CD4-positive, alpha-beta memory T cell (primary cell): ENCODE measurements at regions of chr14 and their contacts with region 1.

Region 1: DNA sequence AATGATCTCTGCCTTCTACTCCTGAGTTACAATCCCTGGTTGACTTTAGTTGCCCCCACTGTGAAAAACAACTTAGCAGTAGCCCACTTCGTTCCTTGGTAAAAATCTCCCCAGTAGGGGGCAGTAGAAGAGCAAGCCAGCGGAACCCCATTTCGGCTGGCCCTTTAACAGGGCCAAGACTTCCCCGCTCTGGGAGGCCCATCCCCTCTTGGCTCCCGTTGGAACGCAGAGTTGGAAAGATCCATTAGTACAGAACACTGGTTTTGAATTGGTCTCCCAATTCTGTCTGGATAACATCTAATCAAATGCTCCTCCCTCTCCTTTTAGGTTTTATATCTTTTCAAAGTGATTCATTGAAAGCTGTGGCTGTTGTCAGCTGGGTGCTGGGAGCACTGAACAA is 1133.3 kb downstream of the BCL11B start:
- DNase-seq: peak; percentile 69 to 81 (median 76)
- H3K4me3 ChIP-seq: peak overlapping the region in 1 of 2 donors; percentile 1
- H3K4me3 Mint-ChIP-seq: peak overlapping the region; percentile 52 to 88 (median 74)
- H3K27ac ChIP-seq: peak overlapping the region; percentile 59
- H3K27ac Mint-ChIP-seq: peak overlapping the region; percentile 84 to 96 (median 92)
- H3K4me1 ChIP-seq: peaks cover 88% of the 10 kb centered on the region
- H3K4me1 Mint-ChIP-seq: peaks cover 59 to 90% (median 77%) of the 10 kb centered on the region in 4 donors
- H3K27me3 ChIP-seq: no peaks in the 10 kb centered on the region
- H3K27me3 Mint-ChIP-seq: no peaks in the 10 kb centered on the region

Region 2: DNA sequence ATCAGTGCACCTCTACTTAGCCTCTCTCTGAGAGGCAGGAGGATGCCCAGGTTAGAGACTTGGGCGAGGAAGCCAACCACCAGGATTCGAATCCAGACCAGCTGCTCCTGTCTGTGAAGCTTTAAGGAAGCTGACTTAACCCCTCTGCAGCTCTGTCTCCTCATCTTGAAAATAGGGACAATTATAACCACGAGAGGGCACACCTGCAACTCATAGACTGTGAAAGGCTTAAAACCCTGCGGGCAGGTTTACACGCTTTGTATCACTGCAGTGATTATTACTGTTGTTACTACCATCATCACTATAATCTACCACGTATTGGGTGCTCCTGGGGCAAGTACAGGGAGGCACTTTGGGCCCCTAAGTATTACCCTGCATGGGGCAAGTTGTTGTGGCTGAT is 961.7 kb before region 1 on chr14:
- CTCF ChIA-PET with region 1: interaction called, 4 read pairs
- POLR2A ChIA-PET with region 1: no interaction called
- intact Hi-C with region 1: loop called (anchors 10 kb)
- DNase-seq: peak; percentile 46 to 53 (median 50)
- H3K4me3 ChIP-seq: no peak overlapping the region
- H3K4me3 Mint-ChIP-seq: peak overlapping the region in 1 of 8 donors; percentile 23
- H3K27ac ChIP-seq: no peak overlapping the region
- H3K27ac Mint-ChIP-seq: peak overlapping the region in 3 of 7 donors; percentile 4 to 71 (median 34)
- H3K4me1 ChIP-seq: peaks cover 3% of the 10 kb centered on the region
- H3K4me1 Mint-ChIP-seq: peaks cover 19 to 43% (median 23%) of the 10 kb centered on the region in 4 donors
- H3K27me3 ChIP-seq: no peaks in the 10 kb centered on the region
- H3K27me3 Mint-ChIP-seq: peaks cover 0 to 1% of the 10 kb centered on the region in 2 donors

Region 3: GRCh38 chr14:98173305-98173704 is 34.6 kb after region 1 on chr14:
- CTCF ChIA-PET with region 1: interaction called, 68 read pairs
- POLR2A ChIA-PET with region 1: interaction called, 44 read pairs
- intact Hi-C with region 1: loop called (anchors 1 kb)
- DNase-seq: peak; percentile 74 to 80 (median 77)
- H3K4me3 ChIP-seq: peak overlapping the region in 1 of 2 donors; percentile 33
- H3K4me3 Mint-ChIP-seq: peak overlapping the region; percentile 75 to 87 (median 81)
- H3K27ac ChIP-seq: peak overlapping the region; percentile 64
- H3K27ac Mint-ChIP-seq: peak overlapping the region; percentile 86 to 99 (median 94)
- H3K4me1 ChIP-seq: peaks cover 100% of the 10 kb centered on the region
- H3K4me1 Mint-ChIP-seq: peaks cover 87 to 100% (median 93%) of the 10 kb centered on the region in 4 donors
- H3K27me3 ChIP-seq: no peaks in the 10 kb centered on the region
- H3K27me3 Mint-ChIP-seq: no peaks in the 10 kb centered on the region

Region 4: GRCh38 chr14:98210045-98210672 is 71.5 kb after region 1 on chr14:
- CTCF ChIA-PET with region 1: interaction called, 5 read pairs
- POLR2A ChIA-PET with region 1: interaction called, 17 read pairs
- intact Hi-C with region 1: no loop called
- DNase-seq: peak in 3 of 5 donors; percentile 34 to 49 (median 36)
- H3K4me3 ChIP-seq: peak overlapping the region in 1 of 2 donors; percentile 27
- H3K4me3 Mint-ChIP-seq: peak overlapping the region; percentile 36 to 87 (median 80)
- H3K27ac ChIP-seq: peak overlapping the region; percentile 38
- H3K27ac Mint-ChIP-seq: peak overlapping the region; percentile 92 to 97 (median 96)
- H3K4me1 ChIP-seq: peaks cover 77% of the 10 kb centered on the region
- H3K4me1 Mint-ChIP-seq: peaks cover 68 to 92% (median 80%) of the 10 kb centered on the region in 4 donors
- H3K27me3 ChIP-seq: no peaks in the 10 kb centered on the region
- H3K27me3 Mint-ChIP-seq: no peaks in the 10 kb centered on the region

Region 5: GRCh38 chr14:98704441-98704840 is 565.8 kb after region 1 on chr14:
- CTCF ChIA-PET with region 1: interaction called, 11 read pairs
- POLR2A ChIA-PET with region 1: no interaction called
- intact Hi-C with region 1: no loop called
- DNase-seq: peak; percentile 42 to 62 (median 47)
- H3K4me3 ChIP-seq: no peak overlapping the region
- H3K4me3 Mint-ChIP-seq: peak overlapping the region in 7 of 8 donors; percentile 30 to 71 (median 53)
- H3K27ac ChIP-seq: no peak overlapping the region
- H3K27ac Mint-ChIP-seq: peak overlapping the region; percentile 0 to 79 (median 13)
- H3K4me1 ChIP-seq: peaks cover 23% of the 10 kb centered on the region
- H3K4me1 Mint-ChIP-seq: peaks cover 16 to 31% (median 24%) of the 10 kb centered on the region in 4 donors
- H3K27me3 ChIP-seq: no peaks in the 10 kb centered on the region
- H3K27me3 Mint-ChIP-seq: peaks cover 0 to 1% of the 10 kb centered on the region in 2 donors

Region 6: GRCh38 chr14:99192028-99192621 is 1053.5 kb after region 1 on chr14:
- CTCF ChIA-PET with region 1: interaction called, 35 read pairs
- POLR2A ChIA-PET with region 1: interaction called, 3 read pairs
- intact Hi-C with region 1: loop called (anchors 1 kb)
- DNase-seq: peak in 3 of 5 donors; percentile 58 to 75 (median 62)
- H3K4me3 ChIP-seq: peak overlapping the region; percentile 48 to 75
- H3K4me3 Mint-ChIP-seq: peak overlapping the region; percentile 81 to 94 (median 88)
- H3K27ac ChIP-seq: peak overlapping the region; percentile 81
- H3K27ac Mint-ChIP-seq: peak overlapping the region; percentile 92 to 99 (median 98)
- H3K4me1 ChIP-seq: peaks cover 94% of the 10 kb centered on the region
- H3K4me1 Mint-ChIP-seq: peaks cover 80 to 97% (median 90%) of the 10 kb centered on the region in 4 donors
- H3K27me3 ChIP-seq: no peaks in the 10 kb centered on the region
- H3K27me3 Mint-ChIP-seq: no peaks in the 10 kb centered on the region